ENCODE measurements at regions of chr2 and their contacts with region 1.

Region 1: GRCh38 chr2:190534310-190535120 is at the start of gene NEMP2:
- DNase-seq: peak; percentile 82
- H3K4me3 Mint-ChIP-seq: peak within 1 kb of the TSS; percentile 95
- H3K27ac Mint-ChIP-seq: peak within 1 kb of the TSS; percentile 99
- H3K4me1 Mint-ChIP-seq: peaks cover 57% of the 10 kb centered on the region
- H3K27me3 Mint-ChIP-seq: no peaks in the 10 kb centered on the region
- total RNA-seq, gene NEMP2: 11.7 and 13.6 TPM in 2 replicates

Region 2: GRCh38 chr2:189783927-189784867 is 750.3 kb before region 1 on chr2 and contains the starts of genes ORMDL1 and PMS1:
- intact Hi-C with region 1: loop called (anchors 10 kb)
- DNase-seq: peak; percentile 94
- H3K4me3 Mint-ChIP-seq: peak within 1 kb of the TSS; percentile 92
- H3K27ac Mint-ChIP-seq: peak within 1 kb of the TSS; percentile 93
- H3K4me1 Mint-ChIP-seq: peaks cover 40% of the 10 kb centered on the region
- H3K27me3 Mint-ChIP-seq: no peaks in the 10 kb centered on the region
- total RNA-seq, gene ORMDL1: 78.7 and 80.1 TPM in 2 replicates
- total RNA-seq, gene PMS1: 54.4 and 55.9 TPM in 2 replicates

Region 3: GRCh38 chr2:190551928-190552327 is 17.4 kb after region 1 on chr2:
- intact Hi-C with region 1: loop called (anchors 1 kb)
- DNase-seq: no peak
- H3K4me3 Mint-ChIP-seq: peak overlapping the region; percentile 62
- H3K27ac Mint-ChIP-seq: no peak overlapping the region
- H3K4me1 Mint-ChIP-seq: peaks cover 24% of the 10 kb centered on the region
- H3K27me3 Mint-ChIP-seq: no peaks in the 10 kb centered on the region

Region 4: DNA sequence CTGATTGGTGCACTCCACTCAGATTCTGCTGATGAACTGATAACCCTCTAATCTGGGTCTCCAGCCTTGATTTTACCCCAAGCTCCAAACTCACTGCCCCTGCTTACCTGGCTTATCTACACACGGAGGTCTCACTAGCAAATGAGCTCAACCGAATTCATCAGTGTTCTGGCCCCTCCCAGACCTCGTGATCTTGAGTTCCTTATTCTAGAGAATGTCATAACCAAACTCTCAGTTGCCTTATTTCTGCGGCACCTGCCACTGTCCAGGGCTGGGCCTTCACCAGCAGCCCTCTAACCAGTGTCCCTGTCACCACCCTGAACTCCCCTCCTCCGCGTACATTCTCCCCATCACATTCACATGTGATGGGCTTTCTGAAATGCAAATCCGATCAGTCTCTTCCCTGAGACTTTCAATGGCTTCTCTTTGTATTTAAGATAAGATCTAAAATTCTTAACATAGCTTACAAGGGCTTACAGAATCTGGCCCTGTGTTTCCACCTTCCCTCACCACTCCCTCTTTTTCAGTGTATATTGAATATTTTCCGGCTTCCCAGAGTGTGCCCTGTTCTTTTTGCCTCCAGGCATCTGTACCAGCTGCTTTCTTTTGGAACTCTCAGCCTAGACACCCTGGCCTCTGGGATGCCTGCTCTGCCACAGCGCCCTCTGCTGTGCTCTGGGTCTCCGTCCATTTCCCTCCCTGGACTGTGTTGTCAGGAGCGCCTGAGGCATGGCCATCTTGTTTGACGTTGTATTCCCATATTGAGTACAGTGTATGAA is 145.5 kb after region 1 on chr2:
- intact Hi-C with region 1: loop called (anchors 1 kb)
- DNase-seq: peak; percentile 27
- H3K4me3 Mint-ChIP-seq: peak overlapping the region; percentile 69
- H3K27ac Mint-ChIP-seq: peak overlapping the region; percentile 87
- H3K4me1 Mint-ChIP-seq: peaks cover 53% of the 10 kb centered on the region
- H3K27me3 Mint-ChIP-seq: no peaks in the 10 kb centered on the region

Region 5: DNA sequence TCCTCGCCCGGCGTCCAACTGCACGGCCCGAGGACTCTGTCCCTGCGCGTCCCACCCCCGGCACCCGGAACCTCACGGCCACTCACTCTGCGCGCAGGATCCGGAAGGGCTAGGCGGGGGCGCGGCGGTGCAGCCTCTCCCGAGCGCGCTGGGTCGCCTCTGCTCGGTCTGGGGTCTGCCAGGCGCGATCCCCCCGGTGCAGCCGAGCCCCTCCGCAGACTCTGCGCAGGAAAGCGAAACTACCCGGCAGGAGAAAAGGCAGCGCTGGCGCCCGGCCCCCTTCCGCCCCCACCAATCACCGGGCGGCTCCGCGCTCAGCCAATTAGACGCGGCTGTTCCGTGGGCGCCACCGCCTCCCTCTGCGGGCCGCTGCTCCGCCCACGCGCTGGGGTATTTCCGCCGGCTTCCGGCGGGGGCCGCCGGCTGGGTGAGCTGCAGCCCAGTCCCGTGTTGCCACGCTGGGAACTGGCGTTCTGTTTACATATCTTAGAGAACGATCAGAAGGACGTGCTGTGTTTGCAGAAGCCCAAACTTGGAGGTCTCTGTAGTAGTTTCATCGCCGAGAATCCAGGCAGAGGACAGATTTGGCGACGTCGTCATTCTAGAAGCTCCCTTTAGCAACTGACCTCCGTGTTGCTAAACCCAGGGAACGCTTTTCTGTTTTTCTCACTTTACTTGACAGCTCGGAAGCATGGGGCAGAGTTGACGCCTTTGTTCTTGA is 479.6 kb after region 1 on chr2 and contains the start of gene STAT1:
- intact Hi-C with region 1: loop called (anchors 5 kb)
- DNase-seq: peak; percentile 97
- H3K4me3 Mint-ChIP-seq: no peak within 1 kb of the TSS
- H3K27ac Mint-ChIP-seq: no peak within 1 kb of the TSS
- H3K4me1 Mint-ChIP-seq: peaks cover 49% of the 10 kb centered on the region
- H3K27me3 Mint-ChIP-seq: no peaks in the 10 kb centered on the region
- total RNA-seq, gene STAT1: 129 and 136 TPM in 2 replicates

Measured in activated T-helper 1 cell treated with anti-CD3 and anti-CD28 coated beads, Interleukin-12 subunit alpha, Interleukin-12 subunit beta, Interleukin-2, Interleukin-4 antibody, amounts not matched to agents 30 ng/mL and 10 ng/mL and 1 ng/mL, durations not matched to agents 14 hours and 24 hours and 36 hours (primary cell).